ENCODE measurements at regions of chr1 and their contacts with region 1.

Region 1: DNA sequence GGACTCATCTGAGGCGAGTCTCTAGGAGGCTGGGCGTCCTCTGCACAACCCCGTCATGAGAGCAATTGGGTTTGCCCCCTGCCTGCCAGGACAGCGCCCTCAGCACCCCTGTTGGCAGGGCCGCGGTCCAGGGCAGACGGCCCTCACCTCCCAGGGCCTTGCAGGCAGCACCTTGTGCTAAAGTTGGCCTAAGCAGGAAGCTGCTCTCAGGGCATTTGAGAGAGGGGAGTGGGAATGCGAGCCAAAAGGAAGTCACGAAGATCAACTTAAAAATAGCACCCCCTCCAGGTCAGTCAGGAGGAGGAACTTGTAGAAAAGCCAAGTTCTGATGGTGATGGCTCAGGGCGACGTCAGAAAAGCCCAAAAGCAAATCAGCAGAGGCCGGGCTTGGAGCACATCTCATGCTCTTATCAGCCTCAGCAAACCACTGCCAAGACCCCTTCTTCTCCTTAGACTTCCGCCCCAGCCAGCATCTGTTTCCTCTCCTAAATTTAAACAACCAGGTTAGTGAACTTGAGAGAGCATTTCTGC is 12.6 kb upstream of the ADORA3 start:
- DNase-seq: peak; percentile 47 to 86
- ATAC-seq: peak; percentile 64 to 87 (median 82)
- H3K4me3 ChIP-seq: peak overlapping the region; percentile 9 to 56 (median 48)
- H3K27ac ChIP-seq: peak overlapping the region; percentile 82 to 96 (median 90)
- H3K4me1 ChIP-seq: peaks cover 19 to 71% (median 55%) of the 10 kb centered on the region in 9 donors
- H3K27me3 ChIP-seq: no peaks in the 10 kb centered on the region
- CTCF ChIP-seq: peak; percentile 9 to 63 (median 48)

Region 2: GRCh38 chr1:111441573-111442192 is 74.4 kb before region 1 on chr1:
- intact Hi-C with region 1: no loop called
- DNase-seq: no peak
- ATAC-seq: peak in 2 of 8 donors; percentile 17 to 26
- H3K4me3 ChIP-seq: no peak overlapping the region
- H3K27ac ChIP-seq: no peak overlapping the region
- H3K4me1 ChIP-seq: peaks cover 0 to 5% (median 0%) of the 10 kb centered on the region in 9 donors
- H3K27me3 ChIP-seq: no peaks in the 10 kb centered on the region
- CTCF ChIP-seq: peak in 7 of 9 donors; percentile 20 to 55 (median 40)

Region 3: DNA sequence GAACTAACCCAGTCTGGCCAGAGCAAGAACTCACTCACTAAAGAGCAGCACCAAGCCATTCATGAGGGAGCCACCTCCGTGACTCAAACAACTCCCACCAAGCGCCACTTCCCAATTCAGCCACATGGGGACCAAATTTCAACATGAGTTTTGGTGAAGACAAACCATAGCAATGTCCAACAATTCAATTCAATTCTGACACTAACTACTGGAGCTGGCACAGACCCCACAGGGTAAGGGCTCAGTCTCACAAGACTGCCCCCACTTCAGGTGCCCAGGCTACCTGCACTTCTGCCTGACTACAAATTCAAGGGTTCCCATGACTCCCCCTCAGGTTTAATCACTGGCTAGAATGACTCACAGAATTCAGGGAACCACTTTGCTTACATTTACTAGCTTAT is 54.7 kb after region 1 on chr1:
- intact Hi-C with region 1: loop called in 1 of 10 experiments (anchors 10 kb)
- DNase-seq: no peak
- ATAC-seq: peak in 1 of 8 donors; percentile 25
- H3K4me3 ChIP-seq: no peak overlapping the region
- H3K27ac ChIP-seq: no peak overlapping the region
- H3K4me1 ChIP-seq: peaks cover 0 to 15% (median 5%) of the 10 kb centered on the region in 9 donors
- H3K27me3 ChIP-seq: no peaks in the 10 kb centered on the region
- CTCF ChIP-seq: peak in 6 of 9 donors; percentile 10 to 38 (median 28)

Region 4: DNA sequence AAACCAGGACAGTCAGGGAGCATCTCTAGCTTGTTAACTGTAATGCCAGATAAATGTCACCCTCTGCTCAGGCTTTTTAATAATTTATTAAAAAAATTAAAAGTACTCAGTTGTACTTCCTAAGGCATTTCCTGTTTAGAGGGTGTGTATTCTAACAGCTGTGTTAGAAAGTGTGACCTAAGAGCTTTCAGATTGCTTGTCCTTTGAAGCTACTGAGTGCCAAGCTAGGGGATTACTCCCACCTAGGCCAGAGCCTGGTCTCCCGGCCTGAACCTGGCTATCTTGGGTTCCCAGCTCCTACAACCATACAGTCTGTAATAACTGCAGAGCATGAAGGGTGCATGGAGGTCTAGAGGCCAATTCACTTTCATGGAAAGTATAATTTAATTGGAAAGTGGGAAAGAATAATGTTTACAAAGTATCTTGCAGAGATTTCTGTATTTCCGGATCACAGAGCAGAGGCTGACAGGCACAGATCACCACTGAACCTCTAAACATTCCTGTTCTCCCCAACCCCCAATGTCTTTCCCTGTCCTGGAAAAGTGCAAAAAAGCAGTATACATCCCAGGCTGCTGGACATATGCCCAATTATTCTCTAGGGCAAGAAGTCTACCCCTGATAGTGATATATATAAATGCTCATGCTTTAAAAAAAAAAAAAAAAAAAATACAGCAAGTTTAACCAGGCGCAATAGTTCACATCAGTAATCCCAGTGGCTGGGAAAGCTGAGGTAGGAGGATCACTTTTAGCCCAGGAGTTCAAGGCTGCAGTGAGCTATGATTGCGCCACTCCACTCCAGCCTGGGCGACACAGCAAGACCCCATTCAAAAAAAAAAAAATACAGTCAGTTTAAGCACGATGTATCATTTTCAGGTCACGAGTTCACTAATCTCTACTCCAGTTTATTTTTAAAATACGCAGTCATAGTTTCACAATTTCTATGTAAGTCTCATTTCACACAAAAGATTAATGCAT is 66.9 kb after region 1 on chr1:
- intact Hi-C with region 1: loop called in 2 of 10 experiments (anchors 5 to 10 kb)
- DNase-seq: no peak
- ATAC-seq: peak in 6 of 8 donors; percentile 37 to 74 (median 53)
- H3K4me3 ChIP-seq: no peak overlapping the region
- H3K27ac ChIP-seq: peak overlapping the region in 8 of 10 donors; percentile 9 to 66 (median 40)
- H3K4me1 ChIP-seq: peaks cover 4 to 26% (median 14%) of the 10 kb centered on the region in 9 donors
- H3K27me3 ChIP-seq: no peaks in the 10 kb centered on the region
- CTCF ChIP-seq: no peak

Region 5: DNA sequence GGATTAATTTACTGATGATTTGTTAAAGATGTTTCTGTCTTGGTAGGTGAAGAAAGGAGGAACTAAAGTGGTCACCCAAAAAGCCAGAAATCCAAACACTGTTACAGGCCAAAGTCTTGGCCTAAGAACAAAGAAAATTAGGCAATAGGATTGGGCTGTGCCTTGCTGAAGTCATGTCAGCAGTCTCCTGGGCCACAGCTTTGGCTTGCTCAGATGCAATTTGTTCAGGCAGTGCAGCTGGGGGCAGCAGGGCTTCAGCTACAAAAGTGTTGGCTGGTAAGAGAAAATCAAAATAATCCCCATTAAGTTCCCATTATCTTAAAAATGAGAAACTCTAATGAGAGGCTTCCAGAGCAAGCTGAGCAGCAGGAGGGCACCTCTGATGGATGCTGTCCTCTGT is 89.5 kb after region 1 on chr1:
- intact Hi-C with region 1: no loop called
- DNase-seq: peak in 1 of 2 donors; percentile 38
- ATAC-seq: peak; percentile 54 to 90 (median 72)
- H3K4me3 ChIP-seq: no peak overlapping the region
- H3K27ac ChIP-seq: peak overlapping the region in 2 of 10 donors; percentile 27 to 53
- H3K4me1 ChIP-seq: peaks cover 0 to 50% (median 10%) of the 10 kb centered on the region in 9 donors
- H3K27me3 ChIP-seq: no peaks in the 10 kb centered on the region
- CTCF ChIP-seq: peak in 1 of 9 donors; percentile 7

Region 6: DNA sequence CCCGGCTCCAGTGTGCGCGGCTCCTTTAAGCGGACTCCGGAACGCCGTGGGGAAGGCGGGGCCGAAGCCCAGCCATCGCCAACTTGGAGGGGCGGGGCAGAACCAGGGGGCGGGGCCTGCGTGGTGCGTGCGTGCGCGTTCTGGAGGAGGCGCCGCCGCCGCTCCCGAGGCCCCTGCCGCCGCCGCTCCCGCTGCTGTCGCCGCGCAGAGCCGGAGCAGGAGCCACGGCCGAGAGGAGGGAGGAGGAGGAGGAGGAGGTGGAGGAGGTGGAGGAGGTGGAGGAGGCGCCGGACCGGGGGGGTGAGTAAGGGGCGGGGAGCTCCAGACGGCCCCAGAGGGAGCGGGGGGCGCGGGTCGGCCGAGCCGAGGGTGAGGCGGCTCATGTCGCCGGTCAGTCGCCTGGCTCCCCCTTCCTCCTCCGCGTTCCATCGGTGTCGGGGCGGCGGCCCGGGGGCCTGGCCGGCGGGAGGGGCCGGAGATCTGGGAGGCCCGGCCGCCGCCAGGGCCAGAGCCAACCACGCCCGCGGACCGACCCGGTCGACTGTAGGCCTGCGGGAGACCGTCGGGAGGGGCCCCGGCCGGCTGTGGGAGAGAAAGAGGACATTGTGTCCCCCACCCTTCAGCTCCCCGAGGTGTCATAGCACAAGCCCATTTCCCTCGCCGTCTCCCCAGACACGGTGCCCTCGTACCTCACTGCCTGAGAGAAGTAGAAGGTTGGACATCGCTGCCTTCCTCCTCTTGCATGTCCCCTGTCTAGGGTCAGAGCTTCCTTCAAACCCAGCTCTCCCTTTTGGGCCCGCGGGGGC is 103.8 kb after region 1 on chr1 and contains the start of gene RAP1A:
- intact Hi-C with region 1: loop called in 4 of 10 experiments (anchors 1 to 10 kb)
- DNase-seq: peak; percentile 96 to 98
- ATAC-seq: peak; percentile 96 to 98 (median 97)
- H3K4me3 ChIP-seq: peak within 1 kb of the TSS; percentile 70 to 97 (median 89)
- H3K27ac ChIP-seq: peak within 1 kb of the TSS; percentile 97 to 100 (median 98)
- H3K4me1 ChIP-seq: peaks cover 5 to 79% (median 56%) of the 10 kb centered on the region in 9 donors
- H3K27me3 ChIP-seq: no peaks in the 10 kb centered on the region
- CTCF ChIP-seq: no peak
- total RNA-seq, gene RAP1A: 83.4 to 120 (median 102) TPM

Region 7: DNA sequence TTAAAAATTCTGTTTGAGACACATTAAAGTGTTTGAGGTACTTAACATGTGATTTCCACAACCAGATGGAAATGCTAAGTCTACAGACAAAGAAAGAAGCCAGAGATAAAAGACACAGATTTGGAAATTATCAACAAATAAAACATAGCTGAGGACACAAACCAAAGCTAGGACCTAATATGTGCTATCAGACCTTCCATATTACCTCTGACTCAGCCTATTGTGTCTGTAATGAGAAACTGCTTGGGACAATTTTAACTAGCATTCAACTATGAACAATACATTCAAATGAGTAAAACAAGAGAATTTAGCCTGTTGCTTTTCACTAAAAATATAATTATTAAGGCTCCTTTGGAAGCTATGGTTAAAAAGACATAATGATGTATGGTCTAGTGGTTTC is 1047.3 kb after region 1 on chr1:
- intact Hi-C with region 1: no loop called
- DNase-seq: no peak
- ATAC-seq: no peak
- H3K4me3 ChIP-seq: no peak overlapping the region
- H3K27ac ChIP-seq: no peak overlapping the region
- H3K4me1 ChIP-seq: no peaks in the 10 kb centered on the region
- H3K27me3 ChIP-seq: no peaks in the 10 kb centered on the region
- CTCF ChIP-seq: no peak